ENCODE measurements at regions of chr10 and their contacts with region 1.

Region 1: DNA sequence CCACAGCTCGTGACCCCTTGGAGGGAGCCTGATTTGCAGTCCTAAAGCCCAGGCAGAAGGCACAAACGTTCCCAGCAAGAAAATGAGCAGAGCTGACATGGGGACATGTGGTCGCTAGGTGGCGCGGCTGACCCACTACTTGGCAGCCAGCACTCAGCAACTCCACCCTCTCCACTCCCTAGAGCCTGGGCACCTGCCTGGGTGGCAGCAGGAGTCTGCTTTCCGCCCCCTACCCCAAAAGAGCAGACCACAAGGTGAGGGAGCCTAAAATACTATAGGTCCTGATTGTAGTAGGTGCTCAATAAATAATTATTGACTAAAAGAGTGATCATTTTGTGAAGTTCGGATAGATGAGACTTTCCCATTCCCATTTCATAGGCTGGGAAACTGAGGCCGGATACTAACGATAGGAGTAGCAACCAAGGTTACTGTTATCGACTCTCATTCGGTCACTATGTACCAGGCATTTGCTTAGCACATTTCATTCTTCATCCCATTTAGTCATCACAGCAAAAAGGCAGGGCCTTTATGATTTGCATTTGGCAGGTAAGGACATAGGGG is 57.4 kb downstream of the NEUROG3 start:
- DNase-seq: peak; percentile 86

Region 2: GRCh38 chr10:69237528-69238159 is 278.1 kb before region 1 on chr10:
- in situ Hi-C with region 1: loop called (anchors 25 kb)
- DNase-seq: peak; percentile 86

Region 3: GRCh38 chr10:69464801-69465401 is 50.9 kb before region 1 on chr10:
- in situ Hi-C with region 1: no loop called
- DNase-seq: peak; percentile 58

Region 4: DNA sequence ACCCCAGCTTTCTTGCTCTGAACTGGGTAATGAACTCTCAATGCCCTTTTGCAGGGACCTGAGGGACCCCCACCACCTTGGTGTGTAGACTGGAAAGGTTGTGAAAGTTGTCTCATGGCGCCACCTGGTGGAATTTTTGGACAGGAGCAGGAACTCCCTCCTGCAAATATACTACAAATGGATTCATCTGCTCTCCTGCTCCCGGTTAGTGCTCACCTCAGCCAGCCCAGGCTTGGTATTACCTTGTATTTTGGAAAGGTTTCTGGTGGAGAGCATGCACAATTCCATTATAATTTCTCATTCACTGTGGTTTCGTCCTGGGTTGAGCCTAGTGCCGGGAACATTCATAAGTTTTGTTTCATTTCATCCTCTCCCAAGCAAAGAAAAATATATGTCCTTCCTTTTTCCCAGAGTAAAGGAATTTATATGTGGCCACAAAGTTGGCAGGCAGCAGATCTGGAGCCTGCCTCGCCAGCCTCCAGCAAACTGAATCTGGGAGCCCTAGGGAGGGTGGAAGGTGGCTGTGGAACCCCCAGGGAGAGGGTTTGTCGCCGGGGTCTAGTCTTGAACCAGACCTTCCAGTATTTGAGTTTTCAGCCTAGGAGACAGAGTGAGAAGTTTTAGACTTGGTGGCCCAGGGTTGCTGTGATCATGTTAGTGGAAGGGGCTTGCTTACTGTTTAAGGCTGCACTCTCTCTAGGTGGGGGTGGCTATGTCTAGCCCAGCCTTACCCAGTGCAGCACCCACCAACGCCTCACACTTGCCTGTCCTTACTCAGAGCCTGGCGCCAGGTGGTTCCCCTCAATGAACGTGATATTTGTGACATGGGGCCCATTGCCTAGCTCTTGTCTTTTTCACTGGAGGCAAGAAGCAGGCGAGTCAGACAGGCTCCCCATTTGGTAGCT is 123.8 kb after region 1 on chr10:
- in situ Hi-C with region 1: loop called (anchors 10 kb)
- DNase-seq: peak; percentile 82

Measured in KBM-7 (cell line).